ENCODE measurements at regions of chr9 and their contacts with region 1.

Region 1: GRCh38 chr9:128218518-128219389 is 15.6 kb downstream of the DNM1 start:
- DNase-seq: peak; percentile 97 to 98
- H3K4me3 ChIP-seq: peak overlapping the region; percentile 6 to 51 (median 18); a peak in 6 of 8 replicates
- H3K27ac ChIP-seq: no peak overlapping the region
- H3K4me1 ChIP-seq: peaks cover 0 to 12% (median 5%) of the 10 kb centered on the region in 4 experiments; a peak in 5 of 7 replicates
- H3K27me3 ChIP-seq: no peaks in the 10 kb centered on the region
- CTCF ChIP-seq: no peak
- EP300 ChIP-seq: no peak
- POLR2A ChIP-seq: peak in 1 of 2 experiments; percentile 31; a peak in 1 of 3 replicates
- RAD21 ChIP-seq: peak in 1 of 2 experiments; percentile 3; a peak in 1 of 4 replicates

Region 2: DNA sequence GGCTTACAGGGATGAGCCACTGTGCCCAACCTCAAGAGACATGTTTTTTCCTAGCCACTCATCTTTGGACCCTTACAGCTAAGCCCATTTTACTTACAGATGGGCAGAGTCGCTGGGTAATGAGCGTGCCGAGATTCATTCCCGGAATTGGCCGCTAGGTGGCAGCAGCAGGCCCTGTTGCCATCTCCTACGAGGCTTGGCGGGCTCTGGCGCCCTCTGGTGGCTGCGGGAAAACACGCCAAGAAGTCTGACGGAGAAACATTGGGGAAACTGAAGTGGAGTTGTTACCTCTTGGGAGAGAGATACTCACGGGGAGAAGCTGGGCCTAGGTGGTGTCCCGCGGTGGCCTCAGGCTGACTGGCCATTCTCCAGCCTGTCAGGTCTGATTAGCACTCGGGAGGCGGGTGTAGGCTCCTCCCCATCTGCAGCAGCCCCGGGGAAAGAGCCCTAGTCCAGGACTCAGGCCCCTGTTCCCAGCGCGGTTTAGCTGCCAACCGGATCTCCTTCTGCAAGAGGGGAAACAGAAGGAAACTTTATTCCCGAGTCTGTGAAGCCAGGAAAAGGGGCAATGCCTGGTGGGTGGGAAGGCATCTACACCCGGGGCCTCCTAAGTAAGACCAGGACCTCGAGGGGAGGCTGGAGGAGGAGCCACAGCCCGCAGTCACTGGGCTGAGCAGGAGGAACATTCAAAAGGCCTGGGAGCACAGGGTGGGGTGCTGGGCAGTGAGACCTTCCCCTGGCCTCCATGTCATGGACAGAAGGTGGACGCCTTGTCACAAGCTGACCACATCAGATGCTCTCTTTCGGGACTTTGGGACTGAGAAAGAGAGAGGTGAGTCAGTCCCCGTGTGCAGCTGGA is 100.9 kb before region 1 on chr9:
- CTCF ChIA-PET with region 1: no interaction called
- POLR2A ChIA-PET with region 1: no interaction called
- DNase-seq: peak; percentile 91 to 100
- H3K4me3 ChIP-seq: peak overlapping the region in 2 of 4 experiments; percentile 14 to 40; a peak in 5 of 8 replicates
- H3K27ac ChIP-seq: no peak overlapping the region
- H3K4me1 ChIP-seq: peaks cover 0 to 4% (median under 1%) of the 10 kb centered on the region in 4 experiments; a peak in 3 of 7 replicates
- H3K27me3 ChIP-seq: no peaks in the 10 kb centered on the region
- CTCF ChIP-seq: peak in 2 of 3 experiments; percentile 100; a peak in 3 of 4 replicates
- EP300 ChIP-seq: no peak
- POLR2A ChIP-seq: peak in 1 of 2 experiments; percentile 21; a peak in 1 of 3 replicates
- RAD21 ChIP-seq: peak; percentile 95

Region 3: GRCh38 chr9:128206916-128207910 is 11.5 kb before region 1 on chr9:
- CTCF ChIA-PET with region 1: interaction called, 14 read pairs
- POLR2A ChIA-PET with region 1: interaction called, 14 read pairs
- DNase-seq: no peak
- H3K4me3 ChIP-seq: no peak overlapping the region
- H3K27ac ChIP-seq: no peak overlapping the region
- H3K4me1 ChIP-seq: peaks cover 3 to 9% (median 7%) of the 10 kb centered on the region in 4 experiments; a peak in 6 of 7 replicates
- H3K27me3 ChIP-seq: no peaks in the 10 kb centered on the region
- CTCF ChIP-seq: no peak
- EP300 ChIP-seq: no peak
- POLR2A ChIP-seq: no peak
- RAD21 ChIP-seq: no peak

Region 4: DNA sequence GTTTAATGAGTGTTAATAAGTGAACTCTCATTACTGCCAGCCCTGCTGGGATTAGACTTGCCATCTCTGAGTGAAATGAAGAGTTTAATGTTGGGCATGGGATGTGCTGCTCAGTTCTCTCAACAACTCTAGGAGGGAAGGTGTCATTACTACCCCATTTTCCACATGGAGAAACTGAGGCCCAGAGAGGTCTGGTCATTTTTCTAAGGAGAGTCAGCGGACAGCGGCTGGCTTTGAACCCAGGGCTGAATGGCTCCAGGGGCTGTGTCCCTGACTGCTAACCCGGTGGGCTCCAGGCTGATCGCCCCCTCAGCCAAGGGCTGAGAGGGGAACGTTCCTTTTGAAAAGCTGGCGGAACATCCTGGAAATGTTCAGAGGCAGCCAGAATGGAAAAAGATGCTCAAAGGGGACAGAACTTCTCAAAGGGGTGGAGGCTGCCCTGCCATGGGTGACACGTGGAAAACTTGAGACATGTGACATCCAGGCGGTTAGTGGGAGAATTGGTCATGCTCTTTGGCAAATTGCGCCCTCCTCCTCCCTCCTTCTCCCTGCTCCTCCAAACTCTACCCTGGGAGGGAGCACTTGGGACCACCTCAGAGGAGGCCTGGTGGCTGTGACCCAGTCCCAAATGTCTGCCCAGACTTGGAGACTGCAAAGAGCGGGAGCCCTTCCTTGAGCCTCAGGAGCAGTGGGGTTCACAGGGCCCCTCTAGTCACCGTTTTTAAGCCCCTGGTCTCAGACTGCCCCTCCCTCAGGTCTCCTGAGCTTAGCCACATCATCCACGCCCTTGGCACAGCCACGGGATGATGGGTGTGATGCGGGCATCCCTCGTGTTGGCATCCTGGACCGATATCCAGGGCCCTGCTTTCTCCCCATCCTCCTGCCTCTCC is 13.1 kb after region 1 on chr9:
- CTCF ChIA-PET with region 1: interaction called, 3 read pairs
- POLR2A ChIA-PET with region 1: interaction called, 21 read pairs
- DNase-seq: no peak
- H3K4me3 ChIP-seq: no peak overlapping the region
- H3K27ac ChIP-seq: no peak overlapping the region
- H3K4me1 ChIP-seq: no peaks in the 10 kb centered on the region
- H3K27me3 ChIP-seq: no peaks in the 10 kb centered on the region; a peak in 1 of 7 replicates
- CTCF ChIP-seq: no peak
- EP300 ChIP-seq: no peak
- POLR2A ChIP-seq: peak in 1 of 2 experiments; percentile 34; a peak in 1 of 3 replicates
- RAD21 ChIP-seq: no peak

Region 5: GRCh38 chr9:128249908-128250838 is 31.4 kb after region 1 on chr9:
- CTCF ChIA-PET with region 1: interaction called, 5 read pairs
- POLR2A ChIA-PET with region 1: interaction called, 10 read pairs
- DNase-seq: peak; percentile 93 to 100
- H3K4me3 ChIP-seq: peak overlapping the region; percentile 59 to 83 (median 63)
- H3K27ac ChIP-seq: no peak overlapping the region
- H3K4me1 ChIP-seq: peaks cover 7 to 10% (median 9%) of the 10 kb centered on the region in 4 experiments
- H3K27me3 ChIP-seq: no peaks in the 10 kb centered on the region; a peak in 1 of 7 replicates
- CTCF ChIP-seq: no peak
- EP300 ChIP-seq: peak in 1 of 2 experiments; percentile 29; a peak in 1 of 3 replicates
- POLR2A ChIP-seq: peak in 1 of 2 experiments; percentile 60; a peak in 2 of 3 replicates
- RAD21 ChIP-seq: no peak